Activated CD4-positive, alpha-beta T cell treated with anti-CD3 and anti-CD28 coated beads, Interleukin-2, amount 10 ng/mL, durations not matched to agents 24 days and 14 days (primary cell): ENCODE measurements at regions of chr4 and their contacts with region 1.

Region 1: GRCh38 chr4:89836897-89837384 is at the start of gene SNCA:
- DNase-seq: peak; percentile 77
- H3K4me3 Mint-ChIP-seq: peak within 1 kb of the TSS; percentile 83
- H3K27ac Mint-ChIP-seq: no peak within 1 kb of the TSS
- H3K4me1 Mint-ChIP-seq: peaks cover 22% of the 10 kb centered on the region
- H3K27me3 Mint-ChIP-seq: peaks cover 70% of the 10 kb centered on the region
- total RNA-seq, gene SNCA: 0.19 and 0.23 TPM in 2 replicates

Region 2: GRCh38 chr4:89797117-89797516 is 39.8 kb before region 1 on chr4:
- intact Hi-C with region 1: loop called (anchors 1 kb)
- DNase-seq: no peak
- H3K4me3 Mint-ChIP-seq: no peak overlapping the region
- H3K27ac Mint-ChIP-seq: no peak overlapping the region
- H3K4me1 Mint-ChIP-seq: no peaks in the 10 kb centered on the region
- H3K27me3 Mint-ChIP-seq: peaks cover 10% of the 10 kb centered on the region

Region 3: DNA sequence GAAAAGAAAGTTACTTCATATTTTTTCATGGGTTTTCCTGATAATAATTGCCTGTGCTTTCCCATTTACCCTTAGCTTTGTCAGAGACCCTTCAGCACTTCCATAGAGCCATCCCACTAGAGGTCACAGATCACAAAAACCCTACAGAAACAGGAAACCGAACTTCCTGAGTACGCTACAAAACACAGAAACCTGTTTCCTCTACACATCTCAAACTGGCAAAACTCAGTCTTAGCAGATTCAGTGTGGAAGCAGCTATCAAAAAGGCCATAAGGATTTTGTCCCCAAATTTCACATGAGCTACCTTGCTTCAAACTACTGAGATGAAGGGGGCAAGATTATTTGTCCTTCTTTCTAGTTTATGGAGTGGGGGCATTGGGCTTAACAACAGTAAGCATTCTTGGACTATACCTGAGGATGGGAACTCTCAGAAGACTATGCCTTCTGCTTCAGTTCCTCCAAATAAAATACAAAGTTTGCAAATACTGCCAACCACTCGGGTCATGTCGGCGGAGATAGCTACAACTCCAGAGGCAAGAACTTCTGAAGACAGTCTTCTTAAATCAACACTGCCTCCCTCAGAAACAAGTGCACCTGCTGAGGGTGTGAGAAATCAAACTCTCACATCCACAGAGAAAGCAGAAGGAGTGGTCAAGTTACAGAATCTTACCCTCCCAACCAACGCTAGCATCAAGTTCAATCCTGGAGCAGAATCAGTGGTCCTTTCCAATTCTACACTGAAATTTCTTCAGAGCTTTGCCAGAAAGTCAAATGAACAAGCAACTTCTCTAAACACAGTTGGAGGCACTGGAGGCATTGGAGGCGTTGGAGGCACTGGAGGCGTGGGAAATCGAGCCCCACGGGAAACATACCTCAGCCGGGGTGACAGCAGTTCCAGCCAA is 58.0 kb after region 1 on chr4 and contains the start of gene MMRN1:
- intact Hi-C with region 1: loop called (anchors 5 kb)
- DNase-seq: peak; percentile 70
- H3K4me3 Mint-ChIP-seq: peak within 1 kb of the TSS; percentile 55
- H3K27ac Mint-ChIP-seq: no peak within 1 kb of the TSS
- H3K4me1 Mint-ChIP-seq: peaks cover 14% of the 10 kb centered on the region
- H3K27me3 Mint-ChIP-seq: peaks cover 3% of the 10 kb centered on the region
- total RNA-seq, gene MMRN1: not detected in 2 replicates